ENCODE measurements at regions of chr12 and their contacts with region 1.

Region 1: DNA sequence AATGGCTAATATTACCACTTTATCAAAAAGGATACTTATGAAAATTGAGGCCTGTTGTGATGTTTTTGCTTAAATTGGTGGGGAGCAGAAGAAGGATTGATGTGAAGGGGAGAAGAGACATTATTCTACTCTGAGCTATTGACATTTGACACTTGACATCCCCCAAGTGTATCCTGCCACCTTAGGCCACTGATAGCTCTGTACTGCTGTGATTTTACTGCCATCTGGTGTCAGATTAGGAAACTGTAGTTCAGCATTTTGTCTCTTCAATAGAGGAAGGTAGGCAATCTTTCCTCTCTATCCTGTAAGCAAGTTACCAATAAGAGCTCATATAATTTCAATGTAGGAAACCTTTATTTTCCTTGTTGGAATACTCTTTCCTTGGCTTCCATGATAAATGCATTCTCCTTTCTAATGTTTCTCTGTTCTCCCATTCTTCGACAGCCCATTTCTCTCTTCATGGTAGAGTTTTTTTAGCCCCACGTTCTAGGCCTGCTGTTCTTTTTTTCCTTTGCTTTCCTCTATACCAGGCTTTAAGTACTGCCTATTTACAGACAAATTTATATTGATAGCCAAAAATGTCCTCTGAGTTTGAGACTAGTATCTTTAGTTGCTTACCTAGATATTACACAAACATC is 46.3 kb downstream of the PPHLN1 start:
- DNase-seq: peak; percentile 83

Region 2: DNA sequence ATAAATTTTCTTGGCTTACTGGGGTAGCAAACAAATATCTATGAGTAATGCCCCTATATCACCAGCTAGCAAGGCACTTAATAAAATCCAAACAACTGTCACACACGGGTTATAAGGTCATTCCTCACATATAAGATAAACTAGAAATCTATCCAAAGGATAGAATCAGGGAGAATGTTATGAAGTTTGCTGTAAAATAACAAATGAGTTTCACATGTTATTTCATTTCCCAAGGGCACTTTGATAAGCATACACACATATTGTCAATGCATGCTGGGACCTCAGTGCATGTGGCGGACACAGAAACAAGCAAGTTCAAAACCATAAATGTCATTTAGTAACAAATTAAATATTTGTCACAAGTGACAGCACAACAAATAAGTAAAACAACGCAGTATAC is 657.0 kb before region 1 on chr12:
- in situ Hi-C with region 1: no loop called
- DNase-seq: no peak

Region 3: GRCh38 chr12:42144408-42145196 is 227.7 kb before region 1 on chr12 and contains the start of gene GXYLT1:
- in situ Hi-C with region 1: loop called (anchors 25 kb)
- DNase-seq: peak; percentile 91

Region 4: DNA sequence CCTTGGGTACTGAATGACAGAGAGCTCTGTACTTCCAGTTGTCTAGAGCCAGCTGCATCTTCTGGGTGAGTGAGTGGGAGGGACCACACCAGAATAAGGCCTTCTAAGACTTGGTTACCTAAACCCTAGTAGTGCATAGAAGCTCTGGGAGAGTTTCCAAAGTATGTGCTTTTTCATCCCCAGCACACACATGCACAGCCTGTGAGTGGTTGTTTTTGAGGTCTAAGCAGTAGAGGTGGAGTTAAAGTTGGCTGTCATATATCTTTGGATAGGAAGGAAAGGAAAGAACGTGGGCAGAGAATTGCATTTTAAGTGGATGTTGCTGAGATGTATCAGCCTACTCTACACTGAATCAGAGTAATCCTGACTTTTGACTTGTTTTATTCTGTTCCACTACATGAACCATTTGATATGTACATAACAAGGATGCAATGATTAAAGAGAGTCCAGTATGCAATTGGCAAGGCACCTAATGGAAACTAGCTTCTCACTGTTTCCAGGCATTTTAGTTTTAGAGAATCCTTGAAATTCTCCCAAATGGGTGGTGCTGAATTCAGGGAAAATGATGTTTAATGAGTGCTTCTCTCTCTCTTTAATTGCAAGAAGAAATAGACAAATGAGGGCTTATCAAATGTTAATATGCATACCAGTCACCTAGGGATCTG is 269.1 kb after region 1 on chr12:
- in situ Hi-C with region 1: no loop called
- DNase-seq: no peak